PC-3 (cell line): ENCODE measurements at regions of chr11 and their contacts with region 1.

Region 1: DNA sequence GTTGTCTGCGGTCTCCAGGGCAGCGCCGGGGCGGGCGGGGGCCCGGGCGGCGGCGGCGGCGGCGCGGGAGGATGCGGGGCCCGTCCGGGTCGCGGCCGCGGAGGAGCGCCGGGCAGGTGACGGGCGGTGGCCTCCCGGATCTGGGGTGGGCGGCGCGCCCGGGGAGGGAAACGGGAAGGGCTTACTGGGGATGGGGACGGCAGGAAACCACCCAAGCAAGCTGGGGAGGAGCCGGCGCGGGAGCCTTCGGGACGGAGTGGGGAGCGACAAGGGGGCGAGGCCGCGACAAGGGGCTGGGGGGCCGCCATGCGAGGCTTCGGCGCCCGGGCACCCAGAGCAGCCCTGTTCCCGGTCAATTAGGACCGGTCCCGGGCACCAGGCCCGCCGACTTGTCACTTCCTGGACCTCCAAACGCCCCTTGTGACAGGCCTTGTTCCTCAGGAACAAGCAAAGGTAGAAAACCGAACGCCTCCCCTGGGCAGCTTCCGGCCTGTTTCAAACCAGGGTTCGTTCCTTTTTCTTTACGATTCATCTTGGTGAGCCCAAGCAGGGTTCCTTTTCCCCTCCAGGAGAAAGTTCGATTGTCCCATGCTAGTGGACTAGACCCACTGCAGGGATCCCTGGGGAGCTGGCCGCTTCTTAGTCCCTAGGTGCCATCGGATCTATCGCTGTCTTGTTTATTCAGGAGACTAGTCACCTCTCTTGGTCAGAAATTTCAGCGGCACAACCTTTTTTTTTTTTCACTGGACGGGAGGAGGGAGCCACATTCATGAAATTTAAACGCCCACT is 492 bp downstream of the JHY start:
- DNase-seq: peak; percentile 83
- ATAC-seq: peak; percentile 81
- H3K4me3 ChIP-seq: peak overlapping the region; percentile 73
- H3K27ac ChIP-seq: peak overlapping the region; percentile 65
- H3K4me1 ChIP-seq: peaks cover 16% of the 10 kb centered on the region
- H3K27me3 ChIP-seq: no peaks in the 10 kb centered on the region
- CTCF ChIP-seq: no peak

Region 2: DNA sequence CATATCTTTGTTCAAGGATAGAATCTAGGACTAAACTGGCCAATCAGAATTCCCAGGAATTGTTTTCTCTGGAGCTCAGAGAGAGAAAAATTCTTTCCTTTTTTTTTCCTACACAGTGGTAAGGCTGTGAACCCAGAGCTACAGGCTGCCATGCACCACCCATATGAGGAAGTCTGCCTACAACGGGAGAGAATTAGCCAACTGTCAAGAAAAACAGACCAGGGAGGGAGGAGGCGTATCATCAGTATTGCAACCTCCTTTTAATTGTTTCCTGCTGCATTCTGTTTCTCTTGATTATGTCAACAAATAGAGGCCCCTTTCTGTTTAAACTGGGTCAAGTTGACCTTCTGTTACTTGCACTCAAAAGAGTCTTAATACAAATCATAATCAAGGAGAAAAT is 404.1 kb before region 1 on chr11:
- CTCF ChIA-PET with region 1: no interaction called
- POLR2A ChIA-PET with region 1: no interaction called
- intact Hi-C with region 1: no loop called
- DNase-seq: no peak
- ATAC-seq: no peak
- H3K4me3 ChIP-seq: no peak overlapping the region
- H3K27ac ChIP-seq: no peak overlapping the region
- H3K4me1 ChIP-seq: no peaks in the 10 kb centered on the region
- H3K27me3 ChIP-seq: peaks cover 50% of the 10 kb centered on the region
- CTCF ChIP-seq: no peak

Region 3: DNA sequence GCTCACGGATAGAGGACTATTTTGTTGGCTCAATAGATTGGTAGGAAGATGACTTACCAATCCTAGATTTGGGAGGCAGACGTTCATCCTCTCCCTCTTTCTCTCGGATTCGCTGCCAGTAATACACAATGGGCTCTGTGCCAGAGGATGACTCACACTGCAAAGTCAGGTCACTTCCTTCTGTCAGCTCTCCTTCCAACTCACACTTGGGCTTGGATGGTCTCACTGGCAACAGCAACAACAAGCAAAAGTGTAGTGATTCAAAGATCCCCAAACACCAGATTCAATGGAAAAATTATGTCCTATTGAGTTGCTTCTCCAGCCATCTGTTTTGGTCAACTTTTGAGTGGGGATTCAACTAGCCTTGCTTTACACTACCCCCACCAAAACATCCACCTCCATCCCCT is 200.6 kb after region 1 on chr11:
- CTCF ChIA-PET with region 1: no interaction called
- POLR2A ChIA-PET with region 1: interaction called, 13 read pairs
- intact Hi-C with region 1: no loop called
- DNase-seq: peak; percentile 100
- ATAC-seq: peak; percentile 96
- H3K4me3 ChIP-seq: no peak overlapping the region
- H3K27ac ChIP-seq: peak overlapping the region; percentile 75
- H3K4me1 ChIP-seq: peaks cover 18% of the 10 kb centered on the region
- H3K27me3 ChIP-seq: no peaks in the 10 kb centered on the region
- CTCF ChIP-seq: no peak

Region 4: DNA sequence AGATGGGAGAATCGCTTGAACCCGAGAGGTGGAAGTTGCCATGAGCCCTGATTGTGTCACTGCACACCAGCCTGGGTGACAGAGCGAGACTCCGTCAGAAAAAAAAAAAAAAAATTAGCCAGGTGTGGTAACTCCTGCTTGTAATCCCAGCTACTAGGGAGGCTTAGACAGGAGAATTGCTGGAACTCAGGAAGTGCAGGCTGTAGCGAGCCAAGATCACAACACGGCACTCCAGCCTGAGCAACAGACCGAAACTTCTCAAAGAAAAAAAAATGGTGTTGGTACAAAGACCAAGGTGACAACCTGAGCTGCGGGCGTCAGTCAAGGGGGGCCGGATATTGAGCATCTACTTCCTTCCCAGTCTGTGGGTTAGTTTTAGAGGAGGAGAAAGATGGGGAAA is 227.3 kb after region 1 on chr11:
- CTCF ChIA-PET with region 1: no interaction called
- POLR2A ChIA-PET with region 1: interaction called, 14 read pairs
- intact Hi-C with region 1: no loop called
- DNase-seq: no peak
- ATAC-seq: no peak
- H3K4me3 ChIP-seq: no peak overlapping the region
- H3K27ac ChIP-seq: no peak overlapping the region
- H3K4me1 ChIP-seq: peaks cover 7% of the 10 kb centered on the region
- H3K27me3 ChIP-seq: no peaks in the 10 kb centered on the region
- CTCF ChIP-seq: no peak

Region 5: DNA sequence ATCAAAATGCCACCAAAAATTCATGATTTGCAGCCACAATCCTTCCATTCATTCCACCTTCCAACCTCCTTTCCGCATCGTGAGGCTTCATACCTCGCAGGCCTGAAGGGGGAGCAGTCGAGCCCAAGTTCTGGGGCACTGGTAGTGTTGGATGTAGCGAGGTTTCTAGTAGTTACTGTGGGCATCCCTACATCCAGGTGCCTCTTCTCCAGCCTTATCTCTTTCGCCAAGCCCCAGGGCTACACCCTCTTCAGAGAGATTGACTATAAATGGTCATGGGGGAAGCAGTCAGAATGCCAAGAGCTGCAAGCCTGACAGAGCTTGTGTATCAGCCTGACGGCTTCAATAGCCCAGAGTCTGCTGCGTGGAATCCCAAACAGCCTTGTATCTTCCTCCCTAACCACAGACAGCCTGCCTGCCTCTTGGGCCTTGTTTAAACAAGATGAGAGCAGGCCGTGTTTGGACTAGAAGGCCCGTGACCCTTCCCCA is 283.1 kb after region 1 on chr11:
- CTCF ChIA-PET with region 1: no interaction called
- POLR2A ChIA-PET with region 1: interaction called, 11 read pairs
- intact Hi-C with region 1: no loop called
- DNase-seq: peak; percentile 57
- ATAC-seq: peak; percentile 53; the same call in 1 of the 2 replicates
- H3K4me3 ChIP-seq: no peak overlapping the region
- H3K27ac ChIP-seq: no peak overlapping the region
- H3K4me1 ChIP-seq: no peaks in the 10 kb centered on the region
- H3K27me3 ChIP-seq: no peaks in the 10 kb centered on the region
- CTCF ChIP-seq: peak; percentile 87

Region 6: DNA sequence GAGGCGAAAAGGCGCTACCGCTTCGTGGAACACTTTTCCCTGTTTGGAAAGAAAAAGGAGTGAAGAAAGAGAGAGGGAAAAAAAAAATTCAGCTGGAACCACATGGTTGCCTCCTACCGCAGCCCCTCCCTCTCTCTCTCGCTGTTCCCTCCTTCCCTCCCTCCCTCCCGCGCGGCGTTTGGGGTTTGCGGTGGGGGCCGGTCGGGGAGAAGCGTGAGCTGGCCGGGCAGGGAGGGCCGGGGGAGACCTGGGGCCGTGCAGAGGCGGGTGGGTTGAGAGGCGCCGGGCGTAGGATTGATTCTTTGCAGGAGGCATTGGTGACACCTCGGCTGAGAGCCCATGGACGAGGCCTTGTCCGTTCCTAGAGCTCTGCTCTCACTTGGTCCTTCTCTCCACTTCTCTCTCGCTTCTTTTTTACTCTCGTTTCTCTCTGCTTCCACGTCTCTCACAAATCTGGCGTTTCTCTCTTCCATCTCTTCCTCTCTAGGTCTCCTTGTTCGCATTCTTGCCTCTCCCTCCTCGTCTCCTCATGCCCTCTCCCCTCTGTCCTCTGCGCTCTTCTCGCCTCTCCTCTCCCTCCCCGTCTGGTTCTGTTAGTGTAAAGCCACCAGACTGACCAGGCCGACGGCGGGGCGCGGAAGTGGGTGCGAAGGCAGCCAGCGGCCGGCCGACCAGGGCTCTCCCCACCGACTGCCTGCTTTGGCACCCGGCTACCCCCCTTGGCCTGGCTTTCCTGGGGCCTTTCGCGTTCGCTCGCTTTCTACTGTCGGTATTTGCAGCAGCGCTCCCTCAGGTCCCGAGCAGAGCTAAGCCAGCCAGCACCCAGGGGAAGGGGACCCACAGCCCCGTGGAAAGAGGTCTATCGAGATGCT is 312.4 kb after region 1 on chr11 and contains the start of gene CLMP:
- CTCF ChIA-PET with region 1: no interaction called
- POLR2A ChIA-PET with region 1: no interaction called
- intact Hi-C with region 1: no loop called
- DNase-seq: peak; percentile 62
- ATAC-seq: peak; percentile 59
- H3K4me3 ChIP-seq: peak within 1 kb of the TSS; percentile 78
- H3K27ac ChIP-seq: peak within 1 kb of the TSS; percentile 23
- H3K4me1 ChIP-seq: peaks cover 44% of the 10 kb centered on the region
- H3K27me3 ChIP-seq: no peaks in the 10 kb centered on the region
- CTCF ChIP-seq: no peak
- total RNA-seq, gene CLMP: 30.4 and 33.0 TPM in 2 replicates

Region 7: GRCh38 chr11:123206791-123207434 is 323.9 kb after region 1 on chr11:
- CTCF ChIA-PET with region 1: no interaction called
- POLR2A ChIA-PET with region 1: no interaction called
- intact Hi-C with region 1: no loop called
- DNase-seq: no peak
- ATAC-seq: no peak; the same call in 1 of the 2 replicates
- H3K4me3 ChIP-seq: no peak overlapping the region
- H3K27ac ChIP-seq: no peak overlapping the region
- H3K4me1 ChIP-seq: peaks cover 1% of the 10 kb centered on the region; the same call in 1 of the 2 replicates
- H3K27me3 ChIP-seq: no peaks in the 10 kb centered on the region
- CTCF ChIP-seq: no peak